ENCODE measurements at regions of chr12 and their contacts with region 1.

Region 1: DNA sequence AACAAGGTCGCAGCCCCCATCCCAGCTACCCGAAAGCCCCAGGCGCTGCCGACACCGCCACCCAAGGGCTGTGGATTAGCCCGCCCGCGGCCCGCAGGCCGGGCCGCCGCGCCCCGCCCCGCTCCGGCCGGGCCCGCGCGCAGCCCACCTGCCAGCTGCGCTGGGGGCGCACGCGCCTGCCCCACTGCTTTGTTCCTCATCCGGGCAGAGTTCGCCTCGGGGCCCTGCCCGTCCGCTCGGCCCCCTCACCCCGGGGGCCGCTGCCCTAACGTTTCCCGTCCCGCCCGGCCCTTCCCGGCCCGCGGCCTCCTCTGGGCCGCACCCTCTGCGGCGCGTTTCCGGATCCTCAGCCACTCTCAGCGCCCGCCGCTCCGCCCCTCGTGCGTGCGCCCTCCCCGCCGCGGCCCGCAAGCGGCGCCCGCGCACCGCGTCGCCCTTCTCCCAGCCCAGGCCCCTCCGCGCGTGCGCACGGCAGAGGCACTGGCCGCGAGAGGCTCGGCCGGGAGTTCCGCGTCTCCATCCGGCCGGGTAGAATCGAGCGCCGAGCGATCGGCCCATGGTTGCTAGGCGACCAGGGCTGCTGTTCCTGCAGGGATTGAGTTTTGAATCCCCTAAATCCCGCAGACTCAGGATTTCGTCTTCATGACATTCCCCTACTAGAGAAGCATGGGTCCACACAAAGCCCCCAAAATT is at the start of gene PRDM4:
- DNase-seq: peak; percentile 53
- H3K4me3 ChIP-seq: peak within 1 kb of the TSS; percentile 69 to 94 (median 90)
- H3K27ac ChIP-seq: peak within 1 kb of the TSS; percentile 88 to 92 (median 90)
- H3K4me1 ChIP-seq: peaks cover 17 to 38% (median 23%) of the 10 kb centered on the region in 3 donors
- H3K27me3 ChIP-seq: no peaks in the 10 kb centered on the region
- CTCF ChIP-seq: peak in 5 of 6 experiments; percentile 28 to 85 (median 65)
- POLR2A ChIP-seq: peak in 3 of 4 donors; percentile 92 to 97 (median 92)
- total RNA-seq, gene PRDM4: 11.4 to 24.8 (median 22.9) TPM

Region 2: GRCh38 chr12:107685360-107686248 is 75.4 kb before region 1 on chr12 and contains the start of gene PWP1:
- intact Hi-C with region 1: loop called (anchors 10 kb)
- DNase-seq: peak; percentile 77
- H3K4me3 ChIP-seq: peak within 1 kb of the TSS; percentile 79 to 95 (median 83)
- H3K27ac ChIP-seq: peak within 1 kb of the TSS; percentile 72 to 93 (median 88)
- H3K4me1 ChIP-seq: peaks cover 10 to 28% (median 13%) of the 10 kb centered on the region in 3 donors
- H3K27me3 ChIP-seq: no peaks in the 10 kb centered on the region
- CTCF ChIP-seq: peak in 1 of 6 experiments; percentile 41
- POLR2A ChIP-seq: peak in 3 of 4 donors; percentile 64 to 73 (median 68)
- total RNA-seq, gene PWP1: 36.9 to 91.0 (median 48.7) TPM

Region 3: DNA sequence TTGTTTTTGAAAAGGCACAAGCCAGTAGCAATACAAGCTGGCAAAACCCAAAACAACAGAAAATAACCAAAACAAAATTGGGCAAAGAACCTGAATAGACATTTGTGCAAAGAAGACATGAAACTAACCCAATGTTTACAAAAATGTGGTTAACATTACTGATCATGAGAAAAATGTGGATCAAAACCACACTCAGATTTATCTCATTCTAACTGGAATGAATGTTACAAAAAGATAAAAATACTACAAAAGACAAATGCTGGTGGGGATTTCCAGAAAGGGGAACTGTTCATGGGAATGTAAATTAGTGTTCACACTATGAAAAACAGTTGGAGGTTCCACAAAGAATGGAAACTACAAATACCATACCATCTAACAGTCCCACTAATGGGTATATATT is 40.2 kb after region 1 on chr12:
- intact Hi-C with region 1: no loop called
- DNase-seq: no peak
- H3K4me3 ChIP-seq: no peak overlapping the region
- H3K27ac ChIP-seq: no peak overlapping the region
- H3K4me1 ChIP-seq: no peaks in the 10 kb centered on the region
- H3K27me3 ChIP-seq: peaks cover 0 to 4% (median 0%) of the 10 kb centered on the region in 4 donors
- CTCF ChIP-seq: no peak
- POLR2A ChIP-seq: no peak

Region 4: GRCh38 chr12:107884769-107885694 is 124.1 kb after region 1 on chr12:
- intact Hi-C with region 1: loop called (anchors 5 kb)
- DNase-seq: peak; percentile 10
- H3K4me3 ChIP-seq: no peak overlapping the region
- H3K27ac ChIP-seq: no peak overlapping the region
- H3K4me1 ChIP-seq: no peaks in the 10 kb centered on the region
- H3K27me3 ChIP-seq: peaks cover 0 to 22% (median 0%) of the 10 kb centered on the region in 4 donors
- CTCF ChIP-seq: peak; percentile 56 to 78 (median 68)
- POLR2A ChIP-seq: no peak

Measured in esophagus squamous epithelium (tissue), 5 donors.